Mammary epithelial cell (primary cell): ENCODE measurements at regions of chr17 and their contacts with region 1.

Region 1: GRCh38 chr17:45394913-45395568 is 37.6 kb downstream of the ARHGAP27 start:
- DNase-seq: peak; percentile 17
- H3K4me3 ChIP-seq: no peak overlapping the region
- H3K27ac ChIP-seq: no peak overlapping the region
- H3K4me1 ChIP-seq: no peaks in the 10 kb centered on the region
- H3K27me3 ChIP-seq: no peaks in the 10 kb centered on the region
- CTCF ChIP-seq: peak; percentile 38 to 61

Region 2: DNA sequence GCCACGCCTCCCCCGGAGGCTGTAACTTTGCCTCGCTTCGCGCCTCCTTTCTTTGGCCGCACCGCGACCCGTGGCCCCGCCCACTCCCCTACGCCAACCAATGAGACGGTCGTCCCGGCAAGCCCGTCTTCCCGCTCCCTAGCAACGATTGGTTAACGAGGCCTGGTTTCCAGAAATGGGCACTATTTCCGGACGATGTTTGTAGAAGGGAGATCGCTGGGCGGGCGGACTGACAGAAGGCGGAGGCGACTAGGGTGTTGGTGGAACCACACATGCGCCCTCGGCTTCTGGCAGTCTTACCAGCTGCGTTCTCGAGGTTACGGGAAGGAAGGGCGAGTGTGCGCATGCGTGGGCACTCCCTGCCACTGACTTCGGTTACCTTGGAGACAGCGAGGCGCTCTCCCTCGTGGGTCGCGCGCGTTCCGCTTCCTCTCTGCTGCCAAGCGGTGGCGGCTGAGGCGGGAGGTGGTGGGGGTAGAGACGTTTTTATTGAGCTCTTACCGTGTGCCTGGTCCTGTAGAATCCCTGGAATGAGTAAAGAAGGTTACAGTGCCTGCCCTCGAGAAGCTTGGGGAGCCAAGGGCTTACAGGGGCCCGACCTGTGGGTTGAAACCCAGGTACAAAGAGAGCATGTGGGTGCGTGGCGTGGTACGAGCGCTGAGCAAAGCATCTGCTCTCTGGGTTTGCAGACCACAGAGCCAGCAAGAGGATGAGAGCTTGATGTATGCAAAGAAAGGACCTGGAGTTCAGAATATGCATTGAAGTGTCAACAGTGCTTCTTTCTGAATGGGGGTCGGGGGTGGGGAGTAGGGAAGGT is 77.7 kb before region 1 on chr17:
- CTCF ChIA-PET with region 1: no interaction called
- dilution Hi-C with region 1: no loop called
- in situ Hi-C with region 1: no loop called
- intact Hi-C with region 1: no loop called
- DNase-seq: peak; percentile 100
- H3K4me3 ChIP-seq: peak overlapping the region; percentile 27 to 50 (median 46)
- H3K27ac ChIP-seq: peak overlapping the region; percentile 92
- H3K4me1 ChIP-seq: peaks cover 78% of the 10 kb centered on the region
- H3K27me3 ChIP-seq: no peaks in the 10 kb centered on the region
- CTCF ChIP-seq: no peak

Region 3: GRCh38 chr17:45332989-45333701 is 61.9 kb before region 1 on chr17:
- CTCF ChIA-PET with region 1: no interaction called
- dilution Hi-C with region 1: no loop called
- in situ Hi-C with region 1: no loop called
- intact Hi-C with region 1: no loop called
- DNase-seq: no peak
- H3K4me3 ChIP-seq: no peak overlapping the region
- H3K27ac ChIP-seq: no peak overlapping the region
- H3K4me1 ChIP-seq: no peaks in the 10 kb centered on the region
- H3K27me3 ChIP-seq: no peaks in the 10 kb centered on the region
- CTCF ChIP-seq: no peak

Region 4: DNA sequence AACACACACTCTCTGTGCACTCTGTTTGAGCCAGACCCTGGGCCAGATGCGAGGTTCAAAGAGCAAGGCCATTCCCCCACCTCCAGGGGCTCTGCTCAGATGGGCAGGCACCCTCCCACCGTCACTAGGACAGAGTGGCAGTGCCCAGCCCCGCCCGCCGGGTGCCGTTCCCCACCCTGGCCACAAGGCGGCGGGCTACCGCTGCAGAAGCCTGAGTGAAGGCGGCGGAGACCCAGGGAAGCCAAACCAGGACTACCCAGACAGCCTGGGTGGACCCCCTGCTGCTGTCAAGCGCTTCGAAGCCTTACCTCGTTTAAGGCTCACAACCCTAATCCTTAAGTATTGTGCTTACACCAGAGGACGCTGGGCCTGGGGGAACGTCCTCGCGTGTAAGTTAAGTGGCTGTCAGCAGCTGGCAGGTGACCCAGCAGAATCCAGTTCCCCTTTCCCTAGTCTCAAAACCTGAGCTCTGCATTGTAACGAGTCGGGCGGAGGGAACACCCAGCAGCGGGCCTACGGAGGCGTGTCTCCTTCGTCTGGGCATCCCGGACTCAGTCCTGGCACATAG is 33.1 kb after region 1 on chr17:
- CTCF ChIA-PET with region 1: interaction called, 4 read pairs
- dilution Hi-C with region 1: no loop called
- in situ Hi-C with region 1: no loop called
- intact Hi-C with region 1: loop called (anchors 2 kb)
- DNase-seq: peak; percentile 63
- H3K4me3 ChIP-seq: no peak overlapping the region
- H3K27ac ChIP-seq: no peak overlapping the region
- H3K4me1 ChIP-seq: peaks cover 29% of the 10 kb centered on the region
- H3K27me3 ChIP-seq: no peaks in the 10 kb centered on the region
- CTCF ChIP-seq: peak; percentile 85 to 97

Region 5: DNA sequence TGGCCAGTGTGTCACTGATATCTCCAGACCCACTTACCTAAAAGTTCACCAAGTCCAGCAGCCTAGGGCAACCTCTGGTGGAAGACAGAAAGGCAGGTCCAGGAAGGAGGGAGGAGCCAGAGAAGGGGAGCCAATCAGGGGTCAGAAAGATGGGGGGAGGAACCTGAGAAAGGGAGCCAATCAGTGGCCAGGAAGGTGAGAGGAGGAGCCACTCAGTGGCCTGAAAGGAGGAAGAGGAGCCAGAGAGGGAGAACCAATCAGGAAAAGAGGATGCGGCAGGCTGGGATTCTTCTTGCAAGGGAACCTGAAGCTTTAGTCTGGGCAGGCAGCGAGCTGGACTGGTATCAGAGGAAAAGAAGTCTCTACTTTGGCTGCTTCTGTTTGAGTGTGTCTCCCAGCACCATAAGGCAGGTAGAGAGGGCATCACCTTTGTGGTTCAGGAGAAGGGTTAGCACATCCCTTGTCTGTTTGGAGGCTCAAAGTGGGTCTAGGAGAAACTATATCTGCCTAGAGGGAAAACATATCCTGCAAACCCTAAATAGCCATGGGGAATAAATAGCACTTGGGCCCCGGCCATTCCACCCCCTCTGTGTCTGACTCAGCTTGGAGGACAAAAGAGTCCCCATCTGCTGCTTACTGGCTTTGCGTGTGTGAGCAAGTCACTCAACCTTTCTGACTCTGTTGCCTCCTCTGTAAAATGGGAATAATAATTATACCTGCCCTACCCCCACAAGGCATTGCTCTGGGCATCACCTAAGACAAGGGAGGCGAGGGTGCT is 345.7 kb after region 1 on chr17:
- CTCF ChIA-PET with region 1: no interaction called
- dilution Hi-C with region 1: no loop called
- in situ Hi-C with region 1: no loop called
- intact Hi-C with region 1: no loop called
- DNase-seq: peak; percentile 33
- H3K4me3 ChIP-seq: no peak overlapping the region
- H3K27ac ChIP-seq: no peak overlapping the region
- H3K4me1 ChIP-seq: no peaks in the 10 kb centered on the region
- H3K27me3 ChIP-seq: peaks cover 2% of the 10 kb centered on the region
- CTCF ChIP-seq: no peak